Posterior vena cava (tissue), 2 donors: ENCODE measurements at regions of chr13 and their contacts with region 1.

Region 1: GRCh38 chr13:61294467-61295191 is 121.0 kb downstream of the PCDH20 start:
- DNase-seq: no peak

Region 2: DNA sequence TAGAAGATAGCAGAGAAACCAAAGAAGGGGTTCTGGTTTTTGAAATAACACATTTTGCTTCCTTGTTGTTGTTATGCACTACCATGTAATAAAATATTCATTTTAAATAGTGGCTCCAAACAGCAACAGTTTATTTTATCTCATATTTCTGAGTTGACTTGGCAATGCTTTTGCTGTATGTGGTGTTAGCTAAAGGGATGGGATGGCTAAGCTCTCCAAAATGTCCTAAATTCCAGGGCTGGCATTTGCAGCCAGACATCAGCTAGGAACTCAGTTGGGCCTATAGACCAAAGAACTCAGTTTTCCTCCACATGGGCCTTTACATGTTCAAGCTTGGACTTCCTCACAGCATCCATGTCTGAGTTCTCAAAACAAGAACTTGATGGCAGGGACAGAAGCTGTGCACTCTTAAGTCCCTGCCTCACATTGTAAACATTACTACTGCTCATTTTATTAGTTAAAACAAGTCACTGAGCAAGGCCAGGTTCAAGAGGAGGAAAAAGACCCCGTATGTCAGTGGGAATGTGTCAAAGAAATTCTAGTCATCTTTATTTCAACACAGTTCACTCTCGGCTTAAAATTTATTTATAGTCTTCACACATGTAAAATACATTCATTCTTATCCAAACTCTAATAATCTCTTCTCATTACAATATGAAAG is 940.3 kb after region 1 on chr13:
- intact Hi-C with region 1: no loop called
- DNase-seq: no peak

Region 3: DNA sequence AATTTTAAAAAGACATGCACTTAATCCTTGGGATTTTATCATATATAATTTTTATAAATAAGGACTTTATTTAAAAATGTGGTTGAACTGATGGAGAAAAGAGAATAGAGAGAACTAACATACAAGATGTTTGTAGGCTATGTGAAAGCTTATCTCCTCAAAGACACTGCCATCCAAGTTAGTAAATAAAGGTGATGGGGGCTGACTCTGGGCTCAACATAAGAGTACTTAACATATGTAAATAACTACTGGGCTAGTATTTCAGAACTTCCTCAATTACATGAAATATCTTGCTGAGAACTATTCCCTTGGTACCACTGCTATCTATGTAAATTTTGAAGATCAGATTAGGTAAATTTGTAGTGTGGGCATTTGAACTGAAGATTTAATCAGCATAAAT is 1138.3 kb after region 1 on chr13:
- intact Hi-C with region 1: loop called in 1 of 2 experiments (anchors 10 kb)
- DNase-seq: no peak